HEK293 (cell line): ENCODE measurements at regions of chr7 and their contacts with region 1.

Region 1: DNA sequence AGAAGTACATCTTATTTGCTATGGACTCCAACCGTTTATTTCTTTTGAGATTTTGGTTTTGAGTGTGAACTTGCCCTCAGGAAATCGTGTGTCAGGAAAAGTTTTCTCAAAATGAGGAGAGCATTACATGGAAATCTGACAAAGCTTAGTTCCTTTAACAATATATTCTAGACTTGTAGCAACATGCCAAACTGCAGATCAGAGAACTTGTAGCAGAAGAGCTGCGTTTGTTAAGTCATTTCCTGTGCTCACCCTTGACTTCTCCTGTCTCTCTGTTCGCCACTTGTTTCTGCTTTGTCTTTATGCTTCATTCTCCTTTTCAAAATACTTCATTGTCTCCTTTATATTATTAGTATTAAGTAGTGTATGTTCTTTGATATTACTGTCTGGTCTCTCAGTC is 116.6 kb upstream of the FOXP2 start:
- H3K4me3 ChIP-seq: no peak overlapping the region
- H3K27ac ChIP-seq: no peak overlapping the region
- H3K4me1 ChIP-seq: peaks cover 6% of the 10 kb centered on the region; the same call in 1 of the 2 replicates
- CTCF ChIP-seq: no peak

Region 2: GRCh38 chr7:114269714-114270113 is 28.3 kb before region 1 on chr7:
- CTCF ChIA-PET with region 1: no interaction called
- POLR2A ChIA-PET with region 1: no interaction called
- H3K4me3 ChIP-seq: no peak overlapping the region
- H3K27ac ChIP-seq: no peak overlapping the region
- H3K4me1 ChIP-seq: peaks cover 3% of the 10 kb centered on the region; the same call in 1 of the 2 replicates
- CTCF ChIP-seq: no peak

Region 3: DNA sequence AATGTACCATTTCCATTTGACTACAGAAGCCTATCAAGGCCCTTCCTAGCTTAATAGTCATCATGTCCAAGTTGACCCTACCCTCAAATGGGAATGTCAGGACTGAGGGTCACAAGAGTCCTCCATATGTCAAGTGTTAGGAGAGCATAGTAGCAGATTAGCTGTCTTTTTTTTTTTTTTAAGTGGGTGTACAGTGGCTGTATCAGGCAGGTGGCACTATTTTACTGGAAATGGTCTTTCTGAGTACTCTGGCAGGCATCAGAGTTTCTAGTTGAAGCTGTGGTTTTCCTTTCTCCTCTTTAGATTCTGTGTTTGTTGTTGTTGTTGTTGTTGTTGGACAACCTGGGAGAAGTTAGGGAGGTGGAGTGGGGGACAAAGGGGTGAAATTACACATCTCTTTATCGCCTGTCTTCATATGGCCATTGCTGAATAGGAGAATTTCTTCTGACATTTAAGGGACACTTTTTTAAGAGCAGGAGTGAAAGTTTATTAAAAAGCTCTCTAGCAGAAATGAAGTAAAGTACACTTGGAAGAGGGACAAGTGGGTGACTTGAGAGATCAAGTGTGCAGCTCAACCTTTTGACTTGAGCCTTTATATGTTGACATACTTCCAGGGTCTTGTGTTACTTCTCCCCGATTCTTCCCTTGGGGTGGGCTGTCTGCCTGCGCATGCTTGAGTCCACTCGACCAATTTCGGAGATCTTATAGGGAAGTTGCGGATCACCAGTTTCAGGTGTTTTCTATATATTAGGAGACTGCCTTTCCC is 12.5 kb after region 1 on chr7:
- CTCF ChIA-PET with region 1: interaction called, 11 read pairs
- POLR2A ChIA-PET with region 1: no interaction called
- H3K4me3 ChIP-seq: no peak overlapping the region
- H3K27ac ChIP-seq: no peak overlapping the region
- H3K4me1 ChIP-seq: peaks cover 11% of the 10 kb centered on the region; the same call in 1 of the 2 replicates
- CTCF ChIP-seq: peak; percentile 59

Region 4: GRCh38 chr7:114405427-114405826 is 107.4 kb after region 1 on chr7:
- CTCF ChIA-PET with region 1: no interaction called
- POLR2A ChIA-PET with region 1: no interaction called
- H3K4me3 ChIP-seq: no peak overlapping the region
- H3K27ac ChIP-seq: no peak overlapping the region
- H3K4me1 ChIP-seq: peaks cover 11% of the 10 kb centered on the region
- CTCF ChIP-seq: no peak

Region 5: GRCh38 chr7:114606100-114606499 is 308.1 kb after region 1 on chr7:
- CTCF ChIA-PET with region 1: no interaction called
- POLR2A ChIA-PET with region 1: no interaction called
- H3K4me3 ChIP-seq: no peak overlapping the region
- H3K27ac ChIP-seq: no peak overlapping the region
- H3K4me1 ChIP-seq: no peaks in the 10 kb centered on the region
- CTCF ChIP-seq: no peak